Panc1 (cell line): ENCODE measurements at regions of chr4 and their contacts with region 1.

Region 1: GRCh38 chr4:80155316-80155982 is 41.9 kb upstream of the PRDM8 start:
- DNase-seq: no peak
- ATAC-seq: no peak
- H3K4me3 ChIP-seq: no peak overlapping the region
- H3K27ac ChIP-seq: no peak overlapping the region
- H3K4me1 ChIP-seq: no peaks in the 10 kb centered on the region
- H3K27me3 ChIP-seq: no peaks in the 10 kb centered on the region
- CTCF ChIP-seq: no peak

Region 2: GRCh38 chr4:80202190-80202711 is 46.8 kb after region 1 on chr4:
- CTCF ChIA-PET with region 1: no interaction called
- POLR2A ChIA-PET with region 1: no interaction called
- in situ Hi-C with region 1: no loop called
- intact Hi-C with region 1: no loop called
- DNase-seq: no peak
- ATAC-seq: no peak
- H3K4me3 ChIP-seq: no peak overlapping the region
- H3K27ac ChIP-seq: no peak overlapping the region
- H3K4me1 ChIP-seq: no peaks in the 10 kb centered on the region
- H3K27me3 ChIP-seq: no peaks in the 10 kb centered on the region
- CTCF ChIP-seq: no peak

Region 3: GRCh38 chr4:80382090-80382832 is 226.8 kb after region 1 on chr4:
- CTCF ChIA-PET with region 1: no interaction called
- POLR2A ChIA-PET with region 1: interaction called, 11 read pairs
- in situ Hi-C with region 1: no loop called
- intact Hi-C with region 1: no loop called
- DNase-seq: no peak
- ATAC-seq: no peak
- H3K4me3 ChIP-seq: no peak overlapping the region
- H3K27ac ChIP-seq: no peak overlapping the region
- H3K4me1 ChIP-seq: no peaks in the 10 kb centered on the region
- H3K27me3 ChIP-seq: no peaks in the 10 kb centered on the region
- CTCF ChIP-seq: no peak